WTC11 (cell line): ENCODE measurements at regions of chr2 and their contacts with region 1.

Region 1: DNA sequence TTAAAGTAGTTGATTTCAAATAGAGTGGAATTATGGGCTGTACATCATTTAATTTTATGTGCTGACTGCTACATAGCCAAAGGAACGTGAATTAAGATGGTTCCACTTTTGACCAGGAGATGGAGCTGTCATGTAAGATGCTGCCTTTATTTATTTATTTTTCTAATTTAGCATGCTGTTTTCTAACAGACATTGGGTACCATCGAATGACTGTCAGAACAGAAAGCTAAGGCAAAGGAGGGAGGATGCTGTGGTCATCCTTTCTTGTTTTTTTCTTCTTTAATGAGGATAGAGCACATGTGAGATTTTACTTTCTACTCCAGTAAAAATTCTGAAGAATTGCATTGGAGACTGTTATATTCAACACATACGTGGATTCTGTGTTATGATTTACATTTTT is at the start of gene SCN2A:
- DNase-seq: no peak
- ATAC-seq: peak; percentile 44; the same call in 1 of the 2 replicates
- H3K4me3 Mint-ChIP-seq: no peak within 1 kb of the TSS
- H3K27ac Mint-ChIP-seq: no peak within 1 kb of the TSS
- H3K4me1 Mint-ChIP-seq: peaks cover 4% of the 10 kb centered on the region; the same call in 1 of the 2 replicates
- H3K27me3 Mint-ChIP-seq: no peaks in the 10 kb centered on the region
- CTCF ChIP-seq: peak; percentile 33
- total RNA-seq, gene SCN2A: 0.39 to 0.53 TPM (median 0.44 TPM) in 3 replicates

Region 2: DNA sequence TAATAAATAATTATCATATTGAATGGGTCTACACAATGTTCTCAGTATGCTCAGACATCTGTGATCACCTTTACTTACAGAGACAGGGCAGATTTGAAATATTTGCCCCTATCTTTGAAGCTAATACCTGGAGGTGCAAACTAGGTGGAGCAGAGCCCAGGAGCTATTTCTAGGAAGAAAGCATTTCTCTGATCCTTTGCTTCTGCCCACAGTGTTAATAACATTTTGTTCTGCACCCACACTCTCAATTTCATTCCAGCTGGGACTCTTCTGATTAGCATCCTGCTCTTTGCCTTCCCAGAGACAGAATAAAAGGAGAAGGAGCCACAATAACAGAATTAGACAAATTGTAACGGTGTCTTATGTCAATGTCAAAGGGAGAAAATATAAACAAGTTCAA is 11.7 kb before region 1 on chr2:
- CTCF ChIA-PET with region 1: interaction called, 10 read pairs
- POLR2A ChIA-PET with region 1: no interaction called
- DNase-seq: no peak
- ATAC-seq: no peak
- H3K4me3 Mint-ChIP-seq: no peak overlapping the region
- H3K27ac Mint-ChIP-seq: no peak overlapping the region
- H3K4me1 Mint-ChIP-seq: peaks cover 4% of the 10 kb centered on the region; the same call in 1 of the 2 replicates
- H3K27me3 Mint-ChIP-seq: no peaks in the 10 kb centered on the region; the same call in 1 of the 2 replicates
- CTCF ChIP-seq: no peak

Region 3: DNA sequence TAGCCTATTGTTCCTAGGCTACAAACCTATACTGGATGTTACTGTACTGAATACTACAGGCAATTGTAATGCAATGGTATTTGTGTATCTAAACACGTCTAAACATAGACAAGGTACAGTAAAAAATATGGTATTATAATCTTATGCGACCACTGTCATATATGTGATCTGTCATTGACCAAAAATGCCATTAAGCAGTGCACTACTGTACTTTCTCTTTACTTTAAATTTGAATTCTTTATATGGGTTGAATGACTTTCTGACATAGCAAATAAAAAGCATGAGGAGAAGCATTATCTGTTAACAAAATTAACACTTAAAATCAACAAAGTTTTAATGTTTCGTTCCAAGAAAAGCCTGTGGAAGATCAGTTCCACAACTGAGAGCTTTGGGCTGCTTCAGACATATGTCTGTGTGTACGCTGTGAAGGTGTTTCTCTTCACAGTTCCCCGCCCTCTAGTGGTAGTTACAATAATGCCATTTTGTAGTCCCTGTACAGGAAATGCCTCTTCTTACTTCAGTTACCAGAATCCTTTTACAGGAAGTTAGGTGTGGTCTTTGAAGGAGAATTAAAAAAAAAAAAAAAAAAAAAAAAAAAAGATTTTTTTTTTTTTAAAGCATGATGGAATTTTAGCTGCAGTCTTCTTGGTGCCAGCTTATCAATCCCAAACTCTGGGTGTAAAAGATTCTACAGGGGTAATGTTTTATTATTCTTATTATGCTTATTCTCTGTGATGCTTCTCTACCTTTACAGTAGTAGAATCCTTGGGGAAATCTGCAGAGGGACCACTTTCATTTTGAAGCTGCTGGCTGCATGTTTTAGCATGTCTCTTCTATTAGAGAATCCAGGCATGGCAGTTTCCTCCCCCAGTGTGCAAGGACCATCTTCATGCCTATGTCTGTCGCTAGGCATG is 54.5 kb after region 1 on chr2:
- CTCF ChIA-PET with region 1: interaction called, 12 read pairs
- POLR2A ChIA-PET with region 1: no interaction called
- DNase-seq: no peak
- ATAC-seq: peak; percentile 100
- H3K4me3 Mint-ChIP-seq: peak overlapping the region; percentile 67
- H3K27ac Mint-ChIP-seq: no peak overlapping the region
- H3K4me1 Mint-ChIP-seq: peaks cover 11% of the 10 kb centered on the region
- H3K27me3 Mint-ChIP-seq: no peaks in the 10 kb centered on the region
- CTCF ChIP-seq: peak; percentile 55; the same call in 1 of the 2 replicates